Sigmoid colon (tissue), 7 donors: ENCODE measurements at regions of chrX and their contacts with region 1.

Region 1: GRCh38 chrX:110317820-110318658 is at the start of gene AMMECR1:
- DNase-seq: peak; percentile 86
- H3K4me3 ChIP-seq: peak within 1 kb of the TSS; percentile 62 to 81 (median 72)
- H3K27ac ChIP-seq: peak within 1 kb of the TSS; percentile 83 to 84 (median 84)
- H3K4me1 ChIP-seq: peaks cover 0 to 11% (median 0%) of the 10 kb centered on the region in 4 donors
- H3K27me3 ChIP-seq: no peaks in the 10 kb centered on the region
- CTCF ChIP-seq: no peak
- EP300 ChIP-seq: no peak
- POLR2A ChIP-seq: peak in 1 of 2 donors; percentile 12
- total RNA-seq, gene AMMECR1: 1.5 to 3.2 (median 2.2) TPM

Region 2: GRCh38 chrX:109536439-109537336 is 781.4 kb before region 1 on chrX and contains the start of gene NXT2:
- intact Hi-C with region 1: loop called (anchors 10 kb)
- DNase-seq: peak; percentile 95
- H3K4me3 ChIP-seq: peak within 1 kb of the TSS; percentile 39 to 56 (median 56)
- H3K27ac ChIP-seq: peak within 1 kb of the TSS; percentile 84 to 89 (median 86)
- H3K4me1 ChIP-seq: no peaks in the 10 kb centered on the region
- H3K27me3 ChIP-seq: no peaks in the 10 kb centered on the region
- CTCF ChIP-seq: no peak
- EP300 ChIP-seq: no peak
- POLR2A ChIP-seq: peak; percentile 34 to 61
- total RNA-seq, gene NXT2: 2.4 to 3.6 (median 3.4) TPM

Region 3: DNA sequence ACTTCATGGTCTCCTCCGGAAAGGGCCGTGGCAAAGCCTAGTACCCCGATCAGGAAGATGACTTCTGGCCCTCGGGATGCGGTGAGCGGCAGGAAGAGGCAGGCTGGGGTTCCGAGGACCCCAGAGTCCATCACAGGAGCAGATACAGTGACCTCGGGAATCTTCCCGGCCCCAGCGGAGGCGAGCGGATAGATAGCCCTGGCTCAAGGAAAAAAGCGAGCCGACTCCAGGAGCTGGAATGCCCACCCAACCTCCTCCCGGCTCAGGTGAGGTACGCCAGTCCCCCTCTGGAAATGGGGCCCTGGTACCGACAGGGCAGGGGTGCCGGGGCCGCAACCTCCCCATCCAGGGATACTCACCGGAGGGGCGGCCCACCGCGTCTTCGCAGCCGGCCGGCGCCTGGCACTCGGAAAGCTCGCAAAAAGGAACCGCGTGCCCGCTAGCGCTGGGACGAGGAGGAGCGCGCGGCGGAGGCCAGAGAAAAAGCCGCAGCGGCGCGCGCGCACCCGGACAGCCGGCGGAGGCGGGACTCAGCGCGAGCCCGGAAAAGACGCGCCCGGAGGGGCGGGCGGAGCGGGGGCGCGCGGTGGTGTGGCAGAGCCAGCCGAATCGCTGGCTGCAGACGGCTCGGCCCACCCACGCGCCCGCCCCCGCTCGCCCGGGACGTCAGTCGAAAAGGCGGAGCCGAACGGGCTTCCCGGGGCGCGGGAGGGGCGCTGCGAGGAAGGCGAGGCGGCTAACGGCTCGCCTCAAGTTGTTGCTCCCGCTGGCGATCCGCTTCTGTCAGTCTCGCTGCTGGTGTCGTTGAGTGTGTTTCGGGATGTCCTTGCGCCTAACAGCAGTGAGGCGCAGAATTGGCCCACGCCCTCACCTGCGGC is 585.0 kb before region 1 on chrX and contains the start of gene ACSL4:
- intact Hi-C with region 1: loop called (anchors 2 kb)
- DNase-seq: peak; percentile 92
- H3K4me3 ChIP-seq: peak within 1 kb of the TSS; percentile 49 to 76 (median 72)
- H3K27ac ChIP-seq: peak within 1 kb of the TSS; percentile 84 to 91 (median 86)
- H3K4me1 ChIP-seq: no peaks in the 10 kb centered on the region
- H3K27me3 ChIP-seq: no peaks in the 10 kb centered on the region
- CTCF ChIP-seq: no peak
- EP300 ChIP-seq: no peak
- POLR2A ChIP-seq: peak; percentile 30 to 38
- total RNA-seq, gene ACSL4: 31.3 to 45.3 (median 39.6) TPM

Region 4: GRCh38 chrX:109782994-109783700 is 534.9 kb before region 1 on chrX:
- intact Hi-C with region 1: no loop called
- DNase-seq: no peak
- H3K4me3 ChIP-seq: no peak overlapping the region
- H3K27ac ChIP-seq: no peak overlapping the region
- H3K4me1 ChIP-seq: no peaks in the 10 kb centered on the region
- H3K27me3 ChIP-seq: no peaks in the 10 kb centered on the region
- CTCF ChIP-seq: no peak
- EP300 ChIP-seq: no peak
- POLR2A ChIP-seq: no peak

Region 5: DNA sequence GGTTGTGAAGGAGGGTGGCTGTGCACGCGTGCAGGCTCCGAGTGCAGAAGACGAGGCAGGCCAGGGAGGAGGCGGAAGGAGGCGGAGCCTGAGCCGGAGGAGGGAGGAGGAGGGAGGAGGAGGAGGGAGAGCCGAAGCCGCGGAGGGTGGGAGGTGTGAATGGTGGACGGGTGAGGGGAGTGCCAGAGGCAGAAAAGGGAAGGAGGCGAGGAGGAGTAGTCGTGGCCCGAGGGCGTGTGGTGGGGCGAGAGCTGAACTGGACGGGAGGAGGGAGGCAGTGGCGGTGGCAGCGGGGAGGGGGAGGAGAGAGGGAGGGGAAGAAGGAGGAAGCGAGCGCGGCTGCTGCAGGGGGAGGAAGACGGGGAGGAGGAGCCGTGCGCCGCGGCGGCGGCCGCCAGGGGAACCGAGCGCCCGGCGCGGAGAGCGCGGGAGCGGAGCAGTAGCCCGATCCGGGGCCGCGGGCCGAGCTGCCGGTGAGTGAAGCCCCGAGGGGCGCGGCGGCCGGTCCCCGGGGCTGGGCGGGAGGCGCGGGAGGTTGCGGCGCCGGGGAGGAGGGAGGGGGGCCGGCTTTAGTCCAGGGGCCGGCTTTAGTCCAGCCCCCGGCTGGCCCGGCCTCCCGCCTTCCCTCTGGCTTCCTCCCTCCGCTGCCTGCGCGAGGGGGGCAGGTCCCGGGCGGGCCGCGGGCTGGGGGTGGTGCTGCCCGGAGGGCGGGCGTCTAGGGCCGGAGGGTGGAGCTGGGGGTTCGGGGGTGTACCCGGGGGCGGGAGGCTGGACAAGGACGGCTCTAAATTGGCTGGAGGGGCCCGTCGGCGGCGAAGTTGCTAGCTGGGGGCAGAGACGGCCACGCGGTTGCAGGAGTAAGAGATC is 315.5 kb before region 1 on chrX and contains the start of gene TMEM164:
- intact Hi-C with region 1: loop called (anchors 2 kb)
- DNase-seq: peak; percentile 91
- H3K4me3 ChIP-seq: peak within 1 kb of the TSS; percentile 50 to 69 (median 62)
- H3K27ac ChIP-seq: peak within 1 kb of the TSS; percentile 81 to 94 (median 88)
- H3K4me1 ChIP-seq: peaks cover 0 to 24% (median 18%) of the 10 kb centered on the region in 4 donors
- H3K27me3 ChIP-seq: peaks cover 0 to 4% (median 0%) of the 10 kb centered on the region in 3 donors
- CTCF ChIP-seq: peak in 1 of 4 experiments; percentile 21
- EP300 ChIP-seq: no peak
- POLR2A ChIP-seq: peak in 1 of 2 donors; percentile 25
- total RNA-seq, gene TMEM164: 6.4 to 15.0 (median 10.4) TPM

Region 6: GRCh38 chrX:110167952-110168451 is 150.0 kb before region 1 on chrX:
- intact Hi-C with region 1: loop called (anchors 10 kb)
- DNase-seq: no peak
- H3K4me3 ChIP-seq: no peak overlapping the region
- H3K27ac ChIP-seq: no peak overlapping the region
- H3K4me1 ChIP-seq: no peaks in the 10 kb centered on the region
- H3K27me3 ChIP-seq: no peaks in the 10 kb centered on the region
- CTCF ChIP-seq: peak in 1 of 4 experiments; percentile 19
- EP300 ChIP-seq: no peak
- POLR2A ChIP-seq: no peak